Heart left ventricle (tissue), 16 donors: ENCODE measurements at regions of chr14 and their contacts with region 1.

Region 1: GRCh38 chr14:76432827-76433752 is 57.2 kb downstream of the ESRRB start:
- DNase-seq: no peak
- ATAC-seq: no peak
- H3K4me3 ChIP-seq: no peak overlapping the region
- H3K27ac ChIP-seq: no peak overlapping the region
- H3K4me1 ChIP-seq: no peaks in the 10 kb centered on the region
- H3K27me3 ChIP-seq: no peaks in the 10 kb centered on the region
- CTCF ChIP-seq: no peak
- POLR2A ChIP-seq: no peak

Region 2: DNA sequence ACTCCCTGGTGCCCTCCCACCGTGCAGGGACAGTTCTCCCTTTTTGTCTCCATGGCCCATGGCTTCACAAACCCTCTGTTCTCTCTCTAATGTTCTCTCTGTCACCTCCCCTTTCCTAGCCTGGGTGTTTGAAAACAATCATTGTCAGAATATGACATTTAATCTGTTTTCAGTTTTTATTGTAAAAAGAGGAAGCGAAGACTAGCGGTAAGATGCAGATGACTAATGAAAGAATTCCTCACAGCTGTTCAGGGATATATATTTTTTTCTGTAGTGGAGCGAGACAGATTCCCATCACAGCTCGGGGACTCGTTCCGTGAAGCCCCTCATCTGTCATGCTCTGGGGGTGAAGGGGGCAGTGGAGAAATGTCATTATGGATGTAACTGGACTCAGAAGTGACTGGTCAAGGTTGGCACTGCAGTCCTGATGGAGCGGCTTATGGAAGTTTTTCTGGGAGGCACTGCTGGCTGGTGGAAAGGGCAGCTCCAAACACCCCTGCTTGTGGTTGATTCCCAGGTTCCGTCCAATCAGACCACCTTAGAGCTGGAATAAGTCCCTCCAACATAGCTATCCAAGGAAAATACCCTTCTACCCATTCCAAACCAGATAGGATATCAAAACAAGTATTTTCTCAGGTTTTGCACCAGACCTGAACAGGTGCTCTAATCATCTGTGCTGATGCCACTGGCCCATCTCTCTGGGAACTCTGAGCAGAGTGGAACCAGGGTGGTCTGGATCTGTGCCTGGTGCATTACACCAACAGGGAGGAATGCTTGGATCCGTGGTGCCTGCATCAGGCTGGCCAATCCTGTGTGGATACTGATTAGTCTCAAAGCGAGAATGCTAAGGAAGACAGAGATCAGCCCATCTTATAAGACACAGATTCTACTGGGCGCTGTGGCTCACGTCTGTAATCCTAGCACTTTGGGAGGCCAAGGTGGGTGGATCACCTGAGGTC is 196.6 kb before region 1 on chr14:
- intact Hi-C with region 1: no loop called
- DNase-seq: no peak
- ATAC-seq: no peak
- H3K4me3 ChIP-seq: no peak overlapping the region
- H3K27ac ChIP-seq: no peak overlapping the region
- H3K4me1 ChIP-seq: no peaks in the 10 kb centered on the region
- H3K27me3 ChIP-seq: no peaks in the 10 kb centered on the region
- CTCF ChIP-seq: no peak
- POLR2A ChIP-seq: no peak

Region 3: GRCh38 chr14:76615331-76615730 is 182.2 kb after region 1 on chr14:
- intact Hi-C with region 1: loop called in 1 of 10 experiments (anchors 10 kb)
- DNase-seq: no peak
- ATAC-seq: no peak
- H3K4me3 ChIP-seq: no peak overlapping the region
- H3K27ac ChIP-seq: no peak overlapping the region
- H3K4me1 ChIP-seq: no peaks in the 10 kb centered on the region
- H3K27me3 ChIP-seq: no peaks in the 10 kb centered on the region
- CTCF ChIP-seq: no peak
- POLR2A ChIP-seq: no peak